ENCODE measurements at regions of chr17 and their contacts with region 1.

Region 1: GRCh38 chr17:73255671-73256181 is 6.0 kb downstream of the CPSF4L start:
- DNase-seq: peak; percentile 70
- ATAC-seq: peak; percentile 65
- H3K4me3 ChIP-seq: no peak overlapping the region
- H3K4me3 Mint-ChIP-seq: no peak overlapping the region
- H3K27ac ChIP-seq: no peak overlapping the region
- H3K27ac Mint-ChIP-seq: no peak overlapping the region
- H3K4me1 ChIP-seq: no peaks in the 10 kb centered on the region
- H3K4me1 Mint-ChIP-seq: peaks cover 1% of the 10 kb centered on the region
- H3K27me3 ChIP-seq: peaks cover 0 to 3% (median 0%) of the 10 kb centered on the region in 4 experiments
- H3K27me3 Mint-ChIP-seq: no peaks in the 10 kb centered on the region
- CTCF ChIP-seq: peak; percentile 99

Region 2: GRCh38 chr17:72556944-72557826 is 698.5 kb before region 1 on chr17:
- CTCF ChIA-PET with region 1: no interaction called
- POLR2A ChIA-PET with region 1: no interaction called
- intact Hi-C with region 1: loop called (anchors 10 kb)
- DNase-seq: peak; percentile 51
- ATAC-seq: peak; percentile 56
- H3K4me3 ChIP-seq: no peak overlapping the region
- H3K4me3 Mint-ChIP-seq: no peak overlapping the region
- H3K27ac ChIP-seq: no peak overlapping the region
- H3K27ac Mint-ChIP-seq: no peak overlapping the region
- H3K4me1 ChIP-seq: no peaks in the 10 kb centered on the region
- H3K4me1 Mint-ChIP-seq: no peaks in the 10 kb centered on the region
- H3K27me3 ChIP-seq: no peaks in the 10 kb centered on the region
- H3K27me3 Mint-ChIP-seq: peaks cover 4% of the 10 kb centered on the region
- CTCF ChIP-seq: peak; percentile 74

Region 3: GRCh38 chr17:72890711-72891110 is 365.0 kb before region 1 on chr17:
- CTCF ChIA-PET with region 1: no interaction called
- POLR2A ChIA-PET with region 1: no interaction called
- intact Hi-C with region 1: no loop called
- DNase-seq: no peak
- ATAC-seq: no peak
- H3K4me3 ChIP-seq: no peak overlapping the region
- H3K4me3 Mint-ChIP-seq: no peak overlapping the region
- H3K27ac ChIP-seq: no peak overlapping the region
- H3K27ac Mint-ChIP-seq: no peak overlapping the region
- H3K4me1 ChIP-seq: no peaks in the 10 kb centered on the region
- H3K4me1 Mint-ChIP-seq: no peaks in the 10 kb centered on the region
- H3K27me3 ChIP-seq: no peaks in the 10 kb centered on the region
- H3K27me3 Mint-ChIP-seq: no peaks in the 10 kb centered on the region
- CTCF ChIP-seq: no peak

Region 4: GRCh38 chr17:73118139-73118538 is 137.6 kb before region 1 on chr17:
- CTCF ChIA-PET with region 1: no interaction called
- POLR2A ChIA-PET with region 1: no interaction called
- intact Hi-C with region 1: no loop called
- DNase-seq: no peak
- ATAC-seq: no peak
- H3K4me3 ChIP-seq: no peak overlapping the region
- H3K4me3 Mint-ChIP-seq: no peak overlapping the region
- H3K27ac ChIP-seq: no peak overlapping the region
- H3K27ac Mint-ChIP-seq: no peak overlapping the region
- H3K4me1 ChIP-seq: no peaks in the 10 kb centered on the region
- H3K4me1 Mint-ChIP-seq: no peaks in the 10 kb centered on the region
- H3K27me3 ChIP-seq: no peaks in the 10 kb centered on the region
- H3K27me3 Mint-ChIP-seq: peaks cover 8% of the 10 kb centered on the region
- CTCF ChIP-seq: no peak

Region 5: DNA sequence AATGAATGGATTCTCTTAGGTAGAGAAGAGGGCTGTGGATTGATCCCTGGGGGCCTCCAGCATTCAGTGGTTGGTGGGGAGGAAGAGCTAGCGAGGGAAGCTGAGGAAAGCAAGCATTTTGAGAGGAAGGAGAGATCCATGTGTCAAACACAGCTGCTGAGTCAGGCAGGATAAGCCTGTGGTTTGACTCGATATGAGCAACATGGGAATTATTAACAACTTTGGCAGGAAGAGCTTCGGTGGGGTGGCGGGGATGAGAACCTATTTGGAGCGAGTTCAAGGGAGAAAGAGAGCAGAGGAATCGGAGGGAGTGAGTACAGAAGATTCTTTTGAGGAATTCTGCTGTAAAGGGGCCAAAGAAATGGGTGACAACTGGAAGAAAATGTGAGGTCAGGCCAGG is 115.6 kb after region 1 on chr17:
- CTCF ChIA-PET with region 1: interaction called, 296 read pairs
- POLR2A ChIA-PET with region 1: interaction called, 3 read pairs
- intact Hi-C with region 1: no loop called
- DNase-seq: no peak
- ATAC-seq: no peak
- H3K4me3 ChIP-seq: no peak overlapping the region
- H3K4me3 Mint-ChIP-seq: no peak overlapping the region
- H3K27ac ChIP-seq: no peak overlapping the region
- H3K27ac Mint-ChIP-seq: no peak overlapping the region
- H3K4me1 ChIP-seq: no peaks in the 10 kb centered on the region
- H3K4me1 Mint-ChIP-seq: no peaks in the 10 kb centered on the region
- H3K27me3 ChIP-seq: no peaks in the 10 kb centered on the region
- H3K27me3 Mint-ChIP-seq: peaks cover 4% of the 10 kb centered on the region
- CTCF ChIP-seq: no peak

Region 6: DNA sequence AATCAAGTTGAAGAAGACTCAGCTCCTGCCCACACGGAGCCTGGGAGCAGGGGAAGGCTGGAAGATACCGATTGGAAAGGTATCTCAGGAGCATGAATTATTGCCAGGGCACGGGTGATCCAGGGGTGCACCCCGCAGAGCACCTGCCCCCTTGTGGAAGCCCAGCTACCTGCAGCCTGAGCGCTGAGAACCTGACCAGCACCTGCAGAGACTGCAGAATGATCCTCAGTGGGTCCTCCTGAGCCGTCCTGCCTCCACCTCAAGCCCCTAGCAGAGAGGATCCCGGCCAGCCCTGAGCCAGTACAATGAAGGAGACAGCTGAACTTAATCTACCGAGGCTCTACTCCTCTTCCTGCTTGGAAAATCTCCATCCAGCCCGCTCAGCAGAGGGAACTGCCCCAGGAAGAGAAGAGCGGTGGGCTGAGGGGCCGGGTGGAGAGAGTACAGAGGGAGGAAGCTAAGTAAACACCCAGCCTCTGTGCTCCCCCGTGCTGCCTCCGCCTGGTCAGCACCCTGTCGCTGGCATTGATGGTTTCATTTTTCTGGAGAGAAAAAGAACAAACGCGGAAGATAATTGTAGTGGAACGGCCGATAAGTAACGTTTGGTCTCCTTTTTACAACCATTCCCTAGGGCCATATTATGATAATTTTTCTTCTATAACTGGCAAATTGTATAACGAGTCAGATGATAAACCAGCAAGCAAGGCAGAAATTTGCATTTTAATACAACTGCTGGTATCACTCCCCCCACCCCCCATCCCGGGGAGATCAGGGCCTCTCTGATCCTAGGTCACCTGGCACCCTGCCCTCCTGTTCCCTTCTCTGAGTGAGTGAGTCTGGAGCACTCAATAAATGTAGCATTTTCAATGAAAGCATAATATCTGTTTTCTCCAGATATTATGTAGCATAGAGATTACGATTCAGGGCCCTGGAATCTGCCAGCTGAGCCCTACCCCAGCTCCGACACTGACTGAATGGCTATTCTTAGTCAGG is 743.2 kb after region 1 on chr17:
- CTCF ChIA-PET with region 1: no interaction called
- POLR2A ChIA-PET with region 1: no interaction called
- intact Hi-C with region 1: loop called (anchors 5 kb)
- DNase-seq: peak; percentile 53
- ATAC-seq: peak; percentile 70
- H3K4me3 ChIP-seq: no peak overlapping the region
- H3K4me3 Mint-ChIP-seq: no peak overlapping the region
- H3K27ac ChIP-seq: no peak overlapping the region
- H3K27ac Mint-ChIP-seq: no peak overlapping the region
- H3K4me1 ChIP-seq: no peaks in the 10 kb centered on the region
- H3K4me1 Mint-ChIP-seq: no peaks in the 10 kb centered on the region
- H3K27me3 ChIP-seq: peaks cover 0 to 4% (median 0%) of the 10 kb centered on the region in 4 experiments
- H3K27me3 Mint-ChIP-seq: peaks cover 28% of the 10 kb centered on the region
- CTCF ChIP-seq: peak; percentile 83

Measured in B cell (primary cell).